ENCODE measurements at regions of chr14 and their contacts with region 1.

Region 1: GRCh38 chr14:73568381-73568781 is 632 bp upstream of the ACOT2 start:
- DNase-seq: no peak
- H3K4me3 ChIP-seq: peak overlapping the region in 2 of 4 experiments; percentile 49 to 72; a peak in 2 of 8 replicates
- H3K27ac ChIP-seq: no peak overlapping the region
- H3K4me1 ChIP-seq: peaks cover 0 to 5% (median 2%) of the 10 kb centered on the region in 4 experiments; a peak in 2 of 7 replicates
- H3K27me3 ChIP-seq: no peaks in the 10 kb centered on the region; a peak in 1 of 7 replicates
- CTCF ChIP-seq: no peak
- EP300 ChIP-seq: no peak
- POLR2A ChIP-seq: no peak
- RAD21 ChIP-seq: no peak

Region 2: DNA sequence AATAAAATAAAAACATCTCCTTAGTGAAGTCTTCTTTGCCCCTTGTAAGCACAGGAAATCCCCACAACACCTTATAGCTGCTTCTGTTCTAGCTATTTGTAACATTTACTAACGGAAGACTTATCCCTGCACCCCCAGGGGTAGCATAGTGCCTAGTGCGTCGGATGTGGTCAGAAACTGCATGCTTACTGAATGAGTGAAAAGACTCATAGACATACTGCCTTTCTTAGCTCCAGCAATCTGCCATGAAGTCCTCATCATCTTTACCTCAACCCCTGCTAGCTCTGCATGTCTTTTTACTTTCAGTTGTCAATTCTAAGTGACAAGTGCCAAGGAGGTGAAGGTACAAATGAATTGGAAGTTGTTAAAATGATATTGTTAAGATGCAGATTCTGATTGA is 64.7 kb before region 1 on chr14:
- CTCF ChIA-PET with region 1: interaction called, 11 read pairs
- POLR2A ChIA-PET with region 1: interaction called, 7 read pairs
- DNase-seq: no peak
- H3K4me3 ChIP-seq: no peak overlapping the region
- H3K27ac ChIP-seq: no peak overlapping the region
- H3K4me1 ChIP-seq: peaks cover 0 to 12% (median 2%) of the 10 kb centered on the region in 4 experiments; a peak in 4 of 7 replicates
- H3K27me3 ChIP-seq: no peaks in the 10 kb centered on the region
- CTCF ChIP-seq: no peak
- EP300 ChIP-seq: no peak
- POLR2A ChIP-seq: no peak
- RAD21 ChIP-seq: no peak

Region 3: GRCh38 chr14:73591690-73592448 is 23.5 kb after region 1 on chr14 and contains the start of gene ACOT4:
- CTCF ChIA-PET with region 1: interaction called, 13 read pairs
- POLR2A ChIA-PET with region 1: interaction called, 11 read pairs
- DNase-seq: peak in 1 of 2 experiments; percentile 54
- H3K4me3 ChIP-seq: peak within 1 kb of the TSS; percentile 39 to 61 (median 50)
- H3K27ac ChIP-seq: no peak within 1 kb of the TSS
- H3K4me1 ChIP-seq: no peaks in the 10 kb centered on the region
- H3K27me3 ChIP-seq: peaks cover 0 to 5% (median 3%) of the 10 kb centered on the region in 4 experiments; a peak in 3 of 7 replicates
- CTCF ChIP-seq: no peak
- EP300 ChIP-seq: no peak
- POLR2A ChIP-seq: no peak
- RAD21 ChIP-seq: no peak
- total RNA-seq, gene ACOT4: 0.48 and 0.80 TPM in 2 replicates

Region 4: DNA sequence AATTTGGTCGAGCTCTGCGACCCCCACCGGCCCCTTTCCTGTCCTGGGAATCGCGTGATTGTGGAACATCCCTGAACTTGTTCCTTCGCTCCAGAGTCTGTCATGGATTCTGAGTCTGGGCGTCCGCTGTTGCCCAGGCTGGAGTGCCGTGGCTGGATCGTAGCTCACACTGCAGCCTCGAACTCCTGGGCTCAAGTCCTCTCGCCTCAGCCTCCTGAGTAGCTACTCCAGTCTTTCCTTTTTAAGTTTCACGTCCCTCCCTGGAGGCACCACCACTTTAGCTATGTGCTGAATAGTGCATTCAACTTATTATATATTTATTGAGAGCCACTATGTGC is 44.6 kb after region 1 on chr14:
- CTCF ChIA-PET with region 1: interaction called, 8 read pairs
- POLR2A ChIA-PET with region 1: interaction called, 14 read pairs
- DNase-seq: no peak
- H3K4me3 ChIP-seq: peak overlapping the region; percentile 51 to 75 (median 70)
- H3K27ac ChIP-seq: no peak overlapping the region
- H3K4me1 ChIP-seq: peaks cover 0 to 5% (median 0%) of the 10 kb centered on the region in 4 experiments; a peak in 1 of 7 replicates
- H3K27me3 ChIP-seq: peaks cover 0 to 32% (median 12%) of the 10 kb centered on the region in 4 experiments; a peak in 5 of 7 replicates
- CTCF ChIP-seq: no peak
- EP300 ChIP-seq: no peak
- POLR2A ChIP-seq: no peak
- RAD21 ChIP-seq: no peak

Region 5: GRCh38 chr14:73633116-73634010 is 65.0 kb after region 1 on chr14:
- CTCF ChIA-PET with region 1: interaction called, 22 read pairs
- POLR2A ChIA-PET with region 1: interaction called, 4 read pairs
- DNase-seq: peak in 1 of 2 experiments; percentile 82
- H3K4me3 ChIP-seq: peak overlapping the region; percentile 31 to 65 (median 58)
- H3K27ac ChIP-seq: no peak overlapping the region; the same call in 1 of the 2 replicates
- H3K4me1 ChIP-seq: peaks cover 0 to 5% (median 1%) of the 10 kb centered on the region in 4 experiments; a peak in 4 of 7 replicates
- H3K27me3 ChIP-seq: no peaks in the 10 kb centered on the region
- CTCF ChIP-seq: peak; percentile 64 to 82 (median 80)
- EP300 ChIP-seq: no peak
- POLR2A ChIP-seq: no peak
- RAD21 ChIP-seq: peak; percentile 81 to 84